GM12878 (cell line): ENCODE measurements at regions of chr1 and their contacts with region 1.

Region 1: DNA sequence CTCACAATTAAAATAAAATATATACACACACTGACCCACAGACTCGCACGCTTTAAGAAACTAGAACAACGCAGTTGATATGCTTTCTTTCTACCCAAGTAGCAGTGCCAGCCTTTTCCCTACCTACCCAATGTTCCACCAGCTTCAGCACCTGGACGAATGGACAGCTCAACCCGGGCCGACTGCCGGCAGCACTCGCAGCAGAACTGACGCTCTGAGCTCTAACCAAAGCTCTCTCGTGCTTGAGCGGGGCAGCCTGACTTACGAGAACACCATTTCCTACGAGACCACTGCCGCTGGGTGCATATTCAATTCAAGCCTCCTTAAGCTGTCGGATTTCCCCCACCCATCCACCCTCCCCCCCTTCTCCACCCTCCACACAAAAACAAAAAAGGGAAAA is 127.4 kb upstream of the DPYD start:
- DNase-seq: no peak
- ATAC-seq: peak; percentile 88
- H3K4me3 ChIP-seq: no peak overlapping the region
- H3K27ac ChIP-seq: no peak overlapping the region
- H3K4me1 ChIP-seq: no peaks in the 10 kb centered on the region
- H3K27me3 ChIP-seq: peaks cover 11 to 24% of the 10 kb centered on the region in 2 experiments
- CTCF ChIP-seq: no peak
- EP300 ChIP-seq: no peak
- POLR2A ChIP-seq: no peak
- RAD21 ChIP-seq: no peak

Region 2: GRCh38 chr1:97145321-97145956 is 902.8 kb before region 1 on chr1:
- CTCF ChIA-PET with region 1: no interaction called
- POLR2A ChIA-PET with region 1: no interaction called
- RAD21 ChIA-PET with region 1: no interaction called
- SMC1A ChIA-PET with region 1: no interaction called
- in situ Hi-C with region 1: loop called (anchors 10 kb)
- intact Hi-C with region 1: no loop called
- DNase-seq: no peak
- ATAC-seq: no peak
- H3K4me3 ChIP-seq: no peak overlapping the region
- H3K27ac ChIP-seq: no peak overlapping the region
- H3K4me1 ChIP-seq: no peaks in the 10 kb centered on the region
- H3K27me3 ChIP-seq: no peaks in the 10 kb centered on the region
- CTCF ChIP-seq: no peak
- EP300 ChIP-seq: no peak
- POLR2A ChIP-seq: no peak
- RAD21 ChIP-seq: no peak

Region 3: DNA sequence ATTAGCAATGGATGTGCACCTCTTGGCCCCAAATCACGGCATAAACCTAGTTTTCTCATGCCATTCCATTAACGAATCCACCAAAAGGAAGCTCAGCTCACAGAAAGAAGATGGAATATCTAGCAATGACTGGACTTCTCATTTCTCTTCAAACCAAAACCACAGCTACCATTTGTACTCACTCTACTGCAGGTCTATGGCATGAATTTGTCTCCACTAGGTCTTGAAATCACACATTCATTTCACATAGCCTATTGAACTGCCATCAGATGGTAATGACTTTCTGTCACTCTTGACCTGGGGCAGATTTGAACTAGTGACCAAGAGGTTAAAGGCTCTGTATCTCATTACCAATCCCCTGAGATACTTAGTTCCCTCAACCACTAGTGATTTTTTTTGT is 510.1 kb before region 1 on chr1:
- CTCF ChIA-PET with region 1: no interaction called
- POLR2A ChIA-PET with region 1: no interaction called
- RAD21 ChIA-PET with region 1: no interaction called
- SMC1A ChIA-PET with region 1: no interaction called
- in situ Hi-C with region 1: no loop called
- intact Hi-C with region 1: no loop called
- DNase-seq: no peak
- ATAC-seq: peak; percentile 92
- H3K4me3 ChIP-seq: no peak overlapping the region
- H3K27ac ChIP-seq: no peak overlapping the region
- H3K4me1 ChIP-seq: no peaks in the 10 kb centered on the region
- H3K27me3 ChIP-seq: no peaks in the 10 kb centered on the region
- CTCF ChIP-seq: no peak
- EP300 ChIP-seq: no peak
- POLR2A ChIP-seq: no peak
- RAD21 ChIP-seq: no peak

Region 4: GRCh38 chr1:97875996-97876395 is 172.2 kb before region 1 on chr1:
- CTCF ChIA-PET with region 1: no interaction called
- POLR2A ChIA-PET with region 1: no interaction called
- RAD21 ChIA-PET with region 1: no interaction called
- SMC1A ChIA-PET with region 1: no interaction called
- in situ Hi-C with region 1: no loop called
- intact Hi-C with region 1: no loop called
- DNase-seq: no peak
- ATAC-seq: no peak
- H3K4me3 ChIP-seq: no peak overlapping the region
- H3K27ac ChIP-seq: no peak overlapping the region
- H3K4me1 ChIP-seq: no peaks in the 10 kb centered on the region
- H3K27me3 ChIP-seq: no peaks in the 10 kb centered on the region
- CTCF ChIP-seq: no peak
- EP300 ChIP-seq: no peak
- POLR2A ChIP-seq: no peak
- RAD21 ChIP-seq: no peak

Region 5: DNA sequence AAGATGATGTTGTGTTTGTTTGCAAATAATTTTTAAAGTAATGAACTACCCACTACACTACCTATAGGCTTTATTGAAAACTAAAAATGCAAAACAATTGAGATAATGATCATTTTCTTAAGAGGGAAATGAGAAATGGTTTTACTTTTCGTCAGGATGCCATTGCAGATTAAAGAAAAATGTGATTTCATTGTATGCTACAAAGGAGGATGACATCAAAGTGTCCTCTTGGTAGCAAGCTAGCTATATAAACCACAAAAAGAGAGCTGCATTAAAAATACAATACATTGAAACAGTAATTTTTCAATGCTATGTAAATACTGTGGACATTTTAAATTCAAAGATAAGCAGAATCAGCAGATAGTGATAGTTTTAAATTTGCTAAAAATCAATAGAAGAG is 39.9 kb before region 1 on chr1:
- CTCF ChIA-PET with region 1: interaction called, 6 read pairs
- POLR2A ChIA-PET with region 1: no interaction called
- RAD21 ChIA-PET with region 1: interaction called, 4 read pairs
- SMC1A ChIA-PET with region 1: interaction called, 11 read pairs
- in situ Hi-C with region 1: no loop called
- intact Hi-C with region 1: no loop called
- DNase-seq: no peak
- ATAC-seq: no peak
- H3K4me3 ChIP-seq: no peak overlapping the region
- H3K27ac ChIP-seq: no peak overlapping the region
- H3K4me1 ChIP-seq: no peaks in the 10 kb centered on the region
- H3K27me3 ChIP-seq: no peaks in the 10 kb centered on the region
- CTCF ChIP-seq: no peak
- EP300 ChIP-seq: no peak
- POLR2A ChIP-seq: no peak
- RAD21 ChIP-seq: no peak